ENCODE measurements at regions of chr6 and their contacts with region 1.

Region 1: GRCh38 chr6:52647199-52647598 is 23.7 kb upstream of the TMEM14A start:
- DNase-seq: no peak
- ATAC-seq: no peak
- H3K4me3 ChIP-seq: no peak overlapping the region
- H3K27ac ChIP-seq: no peak overlapping the region
- H3K4me1 ChIP-seq: peaks cover 0 to 24% of the 10 kb centered on the region in 2 experiments; a peak in 4 of 5 replicates
- H3K27me3 ChIP-seq: no peaks in the 10 kb centered on the region
- CTCF ChIP-seq: no peak
- EP300 ChIP-seq: no peak
- POLR2A ChIP-seq: no peak
- RAD21 ChIP-seq: no peak

Region 2: DNA sequence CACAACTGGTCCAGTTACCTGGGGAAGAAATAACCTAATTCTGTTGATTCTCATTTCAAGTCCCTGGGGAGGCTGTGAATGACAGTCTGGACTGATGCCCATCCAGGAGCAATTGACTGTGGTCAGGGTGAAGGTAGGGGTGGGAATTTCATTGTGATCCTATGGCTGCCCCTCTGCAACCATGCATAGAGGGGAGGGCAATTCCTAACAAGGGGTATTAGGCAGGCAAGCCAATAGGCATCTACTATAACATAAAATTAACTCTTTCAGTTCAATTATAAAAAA is 26.4 kb before region 1 on chr6:
- CTCF ChIA-PET with region 1: no interaction called
- POLR2A ChIA-PET with region 1: no interaction called
- in situ Hi-C with region 1: no loop called
- intact Hi-C with region 1: loop called (anchors 1 kb)
- DNase-seq: no peak
- ATAC-seq: no peak
- H3K4me3 ChIP-seq: no peak overlapping the region
- H3K27ac ChIP-seq: no peak overlapping the region
- H3K4me1 ChIP-seq: peaks cover 0 to 8% of the 10 kb centered on the region in 2 experiments; a peak in 2 of 5 replicates
- H3K27me3 ChIP-seq: no peaks in the 10 kb centered on the region
- CTCF ChIP-seq: no peak
- EP300 ChIP-seq: no peak
- POLR2A ChIP-seq: no peak
- RAD21 ChIP-seq: no peak

Region 3: GRCh38 chr6:52697903-52698302 is 50.7 kb after region 1 on chr6:
- CTCF ChIA-PET with region 1: no interaction called
- POLR2A ChIA-PET with region 1: no interaction called
- in situ Hi-C with region 1: no loop called
- intact Hi-C with region 1: no loop called
- DNase-seq: peak in 1 of 4 experiments; percentile 22
- ATAC-seq: peak; percentile 76
- H3K4me3 ChIP-seq: no peak overlapping the region
- H3K27ac ChIP-seq: no peak overlapping the region
- H3K4me1 ChIP-seq: no peaks in the 10 kb centered on the region
- H3K27me3 ChIP-seq: no peaks in the 10 kb centered on the region
- CTCF ChIP-seq: peak; percentile 13 to 48 (median 14); a peak in 2 of 6 replicates
- EP300 ChIP-seq: no peak
- POLR2A ChIP-seq: no peak
- RAD21 ChIP-seq: peak in 1 of 2 experiments; percentile 38; a peak in 2 of 4 replicates